ENCODE measurements at regions of chr15 and their contacts with region 1.

Region 1: GRCh38 chr15:63909819-63910437 is 76.2 kb upstream of the HERC1 start:
- DNase-seq: peak; percentile 52
- H3K4me3 ChIP-seq: no peak overlapping the region
- H3K27me3 ChIP-seq: no peaks in the 10 kb centered on the region
- CTCF ChIP-seq: no peak

Region 2: GRCh38 chr15:63933522-63933921 is 23.6 kb after region 1 on chr15:
- CTCF ChIA-PET with region 1: interaction called, 3 read pairs
- POLR2A ChIA-PET with region 1: interaction called, 17 read pairs
- DNase-seq: no peak
- H3K4me3 ChIP-seq: no peak overlapping the region
- H3K27me3 ChIP-seq: no peaks in the 10 kb centered on the region
- CTCF ChIP-seq: no peak

Measured in BJ (cell line).